ENCODE measurements at regions of chr6 and their contacts with region 1.

Region 1: GRCh38 chr6:170147832-170148708 is 142.8 kb downstream of the DLL1 start:
- DNase-seq: peak; percentile 91
- ATAC-seq: peak; percentile 88
- H3K4me3 Mint-ChIP-seq: peak overlapping the region; percentile 75
- H3K27ac Mint-ChIP-seq: peak overlapping the region; percentile 99
- H3K4me1 Mint-ChIP-seq: peaks cover 80% of the 10 kb centered on the region
- H3K27me3 Mint-ChIP-seq: peaks cover 13% of the 10 kb centered on the region

Region 2: GRCh38 chr6:170087941-170088581 is 60.0 kb before region 1 on chr6:
- CTCF ChIA-PET with region 1: interaction called, 4 read pairs
- POLR2A ChIA-PET with region 1: interaction called, 43 read pairs
- DNase-seq: peak; percentile 86
- ATAC-seq: peak; percentile 74
- H3K4me3 Mint-ChIP-seq: peak overlapping the region; percentile 90
- H3K27ac Mint-ChIP-seq: peak overlapping the region; percentile 100
- H3K4me1 Mint-ChIP-seq: peaks cover 55% of the 10 kb centered on the region
- H3K27me3 Mint-ChIP-seq: no peaks in the 10 kb centered on the region